Esophagus squamous epithelium (tissue), 5 donors: ENCODE measurements at regions of chr16 and their contacts with region 1.

Region 1: DNA sequence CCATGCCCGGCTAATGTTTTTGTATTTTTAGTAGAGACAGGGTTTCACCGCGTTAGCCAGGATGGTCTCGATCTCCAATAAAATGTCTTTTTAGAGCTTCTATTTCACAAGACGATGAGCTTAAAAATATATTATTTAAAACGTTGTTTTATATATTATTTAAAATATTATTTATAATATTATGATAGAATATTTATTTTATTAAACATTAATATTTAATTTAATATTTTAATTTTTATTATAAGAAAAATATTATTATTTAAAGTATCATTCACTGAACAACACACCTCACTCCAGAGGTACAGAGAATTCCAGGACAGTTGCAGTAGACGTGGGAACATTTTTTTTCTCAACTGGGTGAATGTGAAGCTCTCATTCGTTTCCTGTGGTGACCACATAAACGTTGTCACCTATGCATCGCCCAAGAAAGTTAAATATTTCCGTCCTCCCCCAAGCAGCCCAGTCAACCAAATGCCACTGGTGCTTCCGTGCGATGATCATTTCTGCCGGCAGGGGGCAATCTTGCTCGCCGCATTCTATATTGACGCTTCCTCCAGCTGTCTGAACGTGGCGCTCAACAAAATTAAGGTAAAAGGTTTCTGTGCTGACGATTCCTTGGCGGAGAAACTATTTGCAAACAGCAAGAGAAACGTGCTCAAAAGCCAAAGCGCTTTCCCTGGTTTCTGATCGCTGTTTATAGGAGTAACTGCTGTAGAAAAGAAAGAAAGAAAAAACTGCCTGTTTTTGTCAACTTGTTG is 41.7 kb upstream of the PRSS54 start:
- DNase-seq: no peak
- H3K4me3 ChIP-seq: peak overlapping the region in 2 of 4 donors; percentile 29 to 39
- H3K27ac ChIP-seq: no peak overlapping the region
- H3K4me1 ChIP-seq: peaks cover 0 to 7% (median 4%) of the 10 kb centered on the region in 3 donors
- H3K27me3 ChIP-seq: peaks cover 0 to under 1% (median 0%) of the 10 kb centered on the region in 4 donors
- CTCF ChIP-seq: peak; percentile 85 to 96 (median 92)
- POLR2A ChIP-seq: no peak

Region 2: DNA sequence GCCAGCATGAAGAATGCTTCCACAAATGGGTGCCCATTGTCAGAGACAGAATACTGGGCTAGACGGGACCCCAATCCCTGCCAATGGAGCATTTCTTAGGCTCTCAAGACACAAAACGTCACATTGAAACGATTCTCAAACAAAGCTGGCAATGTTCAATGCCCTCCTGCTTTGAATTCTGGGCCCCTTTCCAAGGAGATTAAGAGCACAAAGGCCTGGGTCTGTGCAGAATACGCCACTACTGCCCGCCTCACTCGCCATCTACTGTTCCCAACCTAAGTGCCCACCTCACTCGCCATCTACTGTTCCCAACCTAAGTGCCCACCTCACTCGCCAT is 217.0 kb before region 1 on chr16:
- intact Hi-C with region 1: no loop called
- DNase-seq: no peak
- H3K4me3 ChIP-seq: no peak overlapping the region
- H3K27ac ChIP-seq: no peak overlapping the region
- H3K4me1 ChIP-seq: peaks cover 21 to 88% (median 47%) of the 10 kb centered on the region in 3 donors
- H3K27me3 ChIP-seq: no peaks in the 10 kb centered on the region
- CTCF ChIP-seq: no peak
- POLR2A ChIP-seq: no peak

Region 3: GRCh38 chr16:58464916-58465731 is 128.6 kb after region 1 on chr16:
- intact Hi-C with region 1: loop called (anchors 5 kb)
- DNase-seq: no peak
- H3K4me3 ChIP-seq: peak overlapping the region; percentile 50 to 70 (median 63)
- H3K27ac ChIP-seq: peak overlapping the region in 3 of 4 donors; percentile 69 to 76 (median 70)
- H3K4me1 ChIP-seq: peaks cover 9 to 47% (median 16%) of the 10 kb centered on the region in 3 donors
- H3K27me3 ChIP-seq: peaks cover 0 to 65% (median 11%) of the 10 kb centered on the region in 4 donors
- CTCF ChIP-seq: no peak
- POLR2A ChIP-seq: no peak

Region 4: GRCh38 chr16:58487566-58488351 is 151.2 kb after region 1 on chr16:
- intact Hi-C with region 1: loop called (anchors 2 kb)
- DNase-seq: no peak
- H3K4me3 ChIP-seq: peak overlapping the region in 3 of 4 donors; percentile 10 to 35 (median 30)
- H3K27ac ChIP-seq: no peak overlapping the region
- H3K4me1 ChIP-seq: peaks cover 0 to 9% (median 6%) of the 10 kb centered on the region in 3 donors
- H3K27me3 ChIP-seq: peaks cover 0 to 6% (median 0%) of the 10 kb centered on the region in 4 donors
- CTCF ChIP-seq: peak; percentile 90 to 95 (median 94)
- POLR2A ChIP-seq: no peak

Region 5: GRCh38 chr16:58652461-58653140 is 316.1 kb after region 1 on chr16:
- intact Hi-C with region 1: loop called (anchors 10 kb)
- DNase-seq: no peak
- H3K4me3 ChIP-seq: no peak overlapping the region
- H3K27ac ChIP-seq: peak overlapping the region in 3 of 4 donors; percentile 71 to 85 (median 81)
- H3K4me1 ChIP-seq: peaks cover 0 to 31% (median 3%) of the 10 kb centered on the region in 3 donors
- H3K27me3 ChIP-seq: no peaks in the 10 kb centered on the region
- CTCF ChIP-seq: no peak
- POLR2A ChIP-seq: no peak

Region 6: DNA sequence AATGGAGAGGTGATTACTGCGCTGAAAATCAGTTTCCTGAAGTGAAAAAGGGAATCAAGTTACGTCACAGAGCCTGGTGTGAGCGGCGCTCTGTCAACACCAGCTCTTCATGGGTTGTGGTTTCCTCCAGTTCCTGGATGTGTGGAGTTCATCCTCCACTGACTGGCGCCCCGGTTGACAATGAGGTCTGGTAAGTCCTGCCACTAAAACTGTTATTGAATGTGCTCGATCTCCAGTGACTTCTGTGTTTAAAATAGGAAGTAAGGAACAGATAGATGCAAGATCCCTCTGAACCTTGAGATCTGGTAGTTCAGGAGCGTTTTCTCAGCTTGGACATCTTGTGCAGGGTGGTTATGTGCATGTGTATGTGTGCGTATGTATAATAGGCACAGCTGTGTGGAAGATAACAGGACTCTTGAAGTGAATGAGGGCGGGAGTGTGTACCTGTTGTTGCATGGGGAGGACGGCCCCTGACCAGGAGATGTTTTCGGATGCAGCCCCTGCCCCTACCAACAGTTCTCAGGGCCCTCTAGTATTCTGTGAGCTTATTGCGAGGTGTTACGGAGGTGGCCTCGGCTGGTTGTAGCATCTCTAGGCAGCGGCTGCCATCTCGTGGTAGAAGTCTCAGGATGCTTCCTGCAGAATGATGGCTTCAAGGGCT is 419.6 kb after region 1 on chr16:
- intact Hi-C with region 1: loop called (anchors 10 kb)
- DNase-seq: peak; percentile 9
- H3K4me3 ChIP-seq: no peak overlapping the region
- H3K27ac ChIP-seq: no peak overlapping the region
- H3K4me1 ChIP-seq: peaks cover 0 to 7% (median 0%) of the 10 kb centered on the region in 3 donors
- H3K27me3 ChIP-seq: no peaks in the 10 kb centered on the region
- CTCF ChIP-seq: peak; percentile 32 to 77 (median 62)
- POLR2A ChIP-seq: no peak